Ovary (tissue), 10 donors: ENCODE measurements at regions of chr2 and their contacts with region 1.

Region 1: GRCh38 chr2:186641807-186642321 is 52.0 kb upstream of the FAM171B start:
- DNase-seq: peak in 2 of 5 donors; percentile 23 to 30
- H3K4me3 ChIP-seq: no peak overlapping the region
- H3K27ac ChIP-seq: no peak overlapping the region
- H3K4me1 ChIP-seq: no peaks in the 10 kb centered on the region
- H3K27me3 ChIP-seq: no peaks in the 10 kb centered on the region
- CTCF ChIP-seq: peak; percentile 49 to 61 (median 57)
- EP300 ChIP-seq: no peak
- POLR2A ChIP-seq: no peak

Region 2: GRCh38 chr2:186503848-186504606 is 137.8 kb before region 1 on chr2:
- intact Hi-C with region 1: loop called in 2 of 4 experiments (anchors 5 kb)
- DNase-seq: no peak
- H3K4me3 ChIP-seq: no peak overlapping the region
- H3K27ac ChIP-seq: no peak overlapping the region
- H3K4me1 ChIP-seq: no peaks in the 10 kb centered on the region
- H3K27me3 ChIP-seq: no peaks in the 10 kb centered on the region
- CTCF ChIP-seq: peak in 2 of 3 donors; percentile 29 to 30
- EP300 ChIP-seq: no peak
- POLR2A ChIP-seq: no peak

Region 3: DNA sequence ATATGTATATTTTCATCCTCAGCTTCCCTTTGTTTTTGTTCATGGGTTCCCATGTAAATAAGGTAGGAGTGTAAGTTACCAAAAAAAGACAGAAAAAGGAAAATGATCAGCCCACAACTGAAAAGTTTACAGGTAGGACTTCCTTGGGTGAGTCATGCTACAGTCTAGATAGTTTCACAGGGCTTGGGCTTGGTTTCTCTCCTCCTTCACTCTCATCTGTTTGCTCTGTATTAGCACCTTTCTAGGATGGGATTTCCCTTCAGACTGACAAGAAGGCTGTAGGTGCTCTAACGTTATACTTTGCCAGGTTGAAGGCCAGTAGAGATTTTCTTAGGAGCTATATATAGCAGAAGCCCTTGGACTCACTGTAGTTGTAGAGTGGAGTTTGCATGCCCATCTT is 109.9 kb after region 1 on chr2:
- intact Hi-C with region 1: no loop called
- DNase-seq: no peak
- H3K4me3 ChIP-seq: no peak overlapping the region
- H3K27ac ChIP-seq: no peak overlapping the region
- H3K4me1 ChIP-seq: no peaks in the 10 kb centered on the region
- H3K27me3 ChIP-seq: no peaks in the 10 kb centered on the region
- CTCF ChIP-seq: no peak
- EP300 ChIP-seq: no peak
- POLR2A ChIP-seq: no peak